ENCODE measurements at regions of chr5 and their contacts with region 1.

Region 1: DNA sequence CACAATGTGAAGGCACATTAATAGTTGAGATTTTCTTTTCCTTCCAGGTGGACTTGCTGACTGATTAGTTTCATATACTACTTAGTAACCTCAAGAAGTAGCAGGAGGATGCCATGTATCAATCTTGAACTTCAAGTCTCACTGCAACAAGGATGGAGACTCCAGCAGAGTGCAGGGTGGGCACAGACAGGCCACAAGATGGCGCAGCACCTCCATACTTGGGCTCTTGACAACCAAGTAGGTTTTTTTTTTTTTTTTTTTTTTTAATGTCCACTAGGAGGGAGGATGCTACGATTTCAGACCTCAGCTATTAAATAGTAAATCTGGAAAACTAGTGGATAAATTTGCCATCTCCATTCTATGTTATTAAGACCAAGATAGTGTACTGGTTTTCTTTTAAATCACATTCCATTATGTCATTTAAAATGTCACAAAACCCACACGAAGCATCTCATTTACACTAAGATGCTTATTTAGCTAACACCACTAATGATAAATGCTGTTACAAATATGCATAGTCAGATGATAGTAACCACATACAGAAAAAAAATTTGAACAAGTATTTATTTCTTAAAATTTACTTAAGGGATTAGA is 58.6 kb downstream of the IL6ST start:
- DNase-seq: peak; percentile 56
- ATAC-seq: peak; percentile 93
- H3K4me3 Mint-ChIP-seq: no peak overlapping the region
- H3K27ac Mint-ChIP-seq: no peak overlapping the region
- H3K4me1 Mint-ChIP-seq: no peaks in the 10 kb centered on the region
- H3K27me3 Mint-ChIP-seq: no peaks in the 10 kb centered on the region
- CTCF ChIP-seq: peak; percentile 48

Region 2: DNA sequence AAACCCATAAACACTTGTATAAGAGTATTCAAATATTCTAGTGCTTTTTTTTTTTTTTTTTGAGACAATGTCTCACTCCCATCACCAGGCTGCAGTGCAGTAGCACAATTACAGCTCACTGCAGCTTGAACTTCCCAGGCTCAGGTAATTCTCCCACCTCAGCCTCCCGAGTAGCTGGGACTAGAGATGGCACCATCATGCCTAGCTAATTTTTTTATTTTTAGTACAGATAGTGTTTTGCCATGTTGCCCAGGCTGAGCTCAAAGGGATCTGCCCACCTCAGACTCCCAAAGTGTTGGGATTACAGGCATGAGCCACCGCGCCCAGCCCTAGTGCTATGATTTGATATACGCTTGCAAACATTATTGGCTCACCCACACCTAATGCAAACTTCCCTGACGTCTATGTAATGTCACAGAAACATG is 46.8 kb after region 1 on chr5:
- CTCF ChIA-PET with region 1: no interaction called
- POLR2A ChIA-PET with region 1: no interaction called
- intact Hi-C with region 1: loop called (anchors 1 kb)
- DNase-seq: no peak
- ATAC-seq: no peak
- H3K4me3 Mint-ChIP-seq: no peak overlapping the region
- H3K27ac Mint-ChIP-seq: no peak overlapping the region
- H3K4me1 Mint-ChIP-seq: no peaks in the 10 kb centered on the region
- H3K27me3 Mint-ChIP-seq: no peaks in the 10 kb centered on the region
- CTCF ChIP-seq: no peak

Region 3: DNA sequence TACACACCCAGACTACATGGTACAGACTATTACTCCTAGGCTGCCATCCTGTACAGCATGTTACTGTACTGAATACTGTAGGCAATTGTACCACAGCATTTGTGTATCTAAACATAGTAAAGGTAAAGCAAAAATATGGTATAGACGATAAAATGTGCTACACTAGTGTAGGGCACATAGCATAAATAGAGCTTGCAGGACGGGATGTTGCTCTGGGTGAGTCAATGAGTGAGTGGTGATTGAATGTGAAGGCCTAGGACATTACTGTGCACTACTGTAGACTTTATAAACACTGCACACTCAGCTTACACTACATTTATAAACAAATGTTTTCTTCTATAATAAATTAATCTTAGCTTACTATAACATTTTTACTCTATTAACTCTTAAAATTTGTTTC is 271.3 kb after region 1 on chr5:
- CTCF ChIA-PET with region 1: interaction called, 76 read pairs
- POLR2A ChIA-PET with region 1: interaction called, 12 read pairs
- intact Hi-C with region 1: no loop called
- DNase-seq: no peak
- ATAC-seq: no peak
- H3K4me3 Mint-ChIP-seq: no peak overlapping the region
- H3K27ac Mint-ChIP-seq: no peak overlapping the region
- H3K4me1 Mint-ChIP-seq: no peaks in the 10 kb centered on the region
- H3K27me3 Mint-ChIP-seq: peaks cover 6% of the 10 kb centered on the region
- CTCF ChIP-seq: no peak

Region 4: GRCh38 chr5:56852228-56853000 is 916.2 kb after region 1 on chr5:
- CTCF ChIA-PET with region 1: interaction called, 3 read pairs
- POLR2A ChIA-PET with region 1: no interaction called
- intact Hi-C with region 1: loop called (anchors 5 kb)
- DNase-seq: no peak
- ATAC-seq: no peak
- H3K4me3 Mint-ChIP-seq: peak overlapping the region; percentile 54
- H3K27ac Mint-ChIP-seq: peak overlapping the region; percentile 8
- H3K4me1 Mint-ChIP-seq: peaks cover 95% of the 10 kb centered on the region
- H3K27me3 Mint-ChIP-seq: no peaks in the 10 kb centered on the region
- CTCF ChIP-seq: no peak

Measured in activated B cell treated with CpG ODN at 0.5 μM for 24 hours (primary cell).